ENCODE measurements at regions of chr15 and their contacts with region 1.

Region 1: DNA sequence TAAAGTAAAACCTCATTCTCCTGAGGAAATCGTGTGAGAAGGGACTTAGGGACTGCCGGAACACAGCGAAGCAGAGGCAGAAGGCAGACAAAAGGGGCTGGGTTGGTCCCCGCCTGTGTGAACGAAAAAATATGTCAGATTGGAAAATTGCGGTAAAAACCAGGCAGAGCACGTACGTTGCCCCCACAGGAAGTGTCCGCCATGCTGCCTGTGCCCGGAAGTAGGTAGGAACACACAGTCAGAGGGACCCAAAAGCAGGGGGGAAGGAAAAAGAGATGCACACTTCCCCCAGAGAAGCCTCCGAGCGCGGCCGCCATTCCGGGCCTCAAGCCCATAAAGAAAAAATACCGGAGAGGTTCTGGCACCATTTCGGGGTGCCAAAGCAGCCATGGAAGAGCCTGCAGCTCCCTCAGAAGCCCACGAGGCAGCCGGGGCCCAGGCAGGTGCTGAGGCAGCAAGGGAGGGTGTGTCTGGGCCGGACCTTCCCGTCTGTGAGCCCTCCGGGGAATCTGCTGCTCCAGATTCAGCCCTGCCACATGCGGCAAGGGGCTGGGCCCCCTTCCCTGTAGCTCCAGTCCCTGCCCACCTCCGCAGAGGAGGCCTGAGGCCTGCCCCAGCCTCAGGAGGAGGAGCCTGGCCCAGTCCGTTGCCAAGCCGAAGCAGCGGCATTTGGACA is at the start of gene MKRN3:
- DNase-seq: peak in 9 of 10 donors; percentile 26 to 92 (median 63)

Region 2: DNA sequence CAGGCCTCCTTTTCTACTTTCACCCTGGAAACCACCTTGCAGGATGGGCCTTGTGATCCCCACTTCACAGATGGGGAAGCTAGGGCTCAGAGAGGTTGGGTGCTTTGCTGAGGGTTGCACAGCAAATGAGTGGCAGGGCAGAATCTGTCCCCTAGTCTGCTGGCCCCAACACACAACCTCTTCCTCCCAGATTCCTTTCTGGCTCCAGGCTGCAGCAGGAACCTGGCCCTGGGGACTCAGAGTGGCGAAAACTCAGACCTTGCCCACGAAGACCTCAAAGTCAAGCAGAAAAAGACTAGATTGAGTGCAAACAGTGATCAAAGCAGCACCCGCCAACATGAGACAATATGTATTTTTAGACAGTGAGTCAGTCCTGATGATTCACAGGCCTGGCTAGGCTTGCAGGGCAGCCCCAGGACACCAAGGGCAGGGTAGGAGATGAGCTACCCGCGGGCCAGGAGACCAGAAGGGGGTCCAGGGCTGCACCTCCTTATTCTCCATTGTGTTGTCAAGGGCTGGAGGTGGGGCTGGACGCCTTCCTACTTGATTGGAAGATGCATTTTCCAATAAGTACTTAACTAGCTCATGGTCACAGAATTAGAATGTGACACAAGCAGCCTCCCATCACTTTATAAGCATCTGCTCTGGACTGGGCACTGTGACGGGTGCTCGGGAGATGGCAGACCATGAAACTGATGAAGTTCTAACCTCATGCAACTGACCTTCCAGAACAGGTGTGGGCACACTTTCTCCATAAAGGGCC is 142.4 kb before region 1 on chr15:
- intact Hi-C with region 1: no loop called
- DNase-seq: peak in 1 of 10 donors; percentile 65

Region 3: DNA sequence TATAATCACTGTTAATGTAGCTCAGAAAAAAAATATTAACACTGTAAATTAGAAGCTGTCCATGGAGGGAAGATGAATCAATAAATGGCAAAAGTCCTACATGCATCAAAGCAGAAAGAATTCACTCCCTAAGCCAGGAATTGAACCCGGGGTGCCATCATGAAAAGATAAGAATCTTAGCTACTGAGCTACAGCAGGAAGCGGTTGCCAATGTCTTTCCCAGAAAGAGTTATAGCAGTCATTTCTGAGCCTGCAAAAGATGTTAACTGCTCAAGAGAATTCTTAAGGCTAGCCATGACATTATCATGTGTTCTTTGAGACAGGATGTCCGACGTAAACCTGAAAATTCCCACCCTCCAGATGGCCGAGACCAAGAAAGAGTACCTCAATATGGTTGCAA is 47.4 kb before region 1 on chr15:
- intact Hi-C with region 1: loop called (anchors 10 kb)
- DNase-seq: no peak

Region 4: GRCh38 chr15:23877502-23878412 is 312.2 kb after region 1 on chr15:
- intact Hi-C with region 1: no loop called
- DNase-seq: peak in 8 of 10 donors; percentile 54 to 93 (median 64)